Activated B cell treated with CpG ODN at 0.5 μM for 24 hours (primary cell): ENCODE measurements at regions of chr1 and their contacts with region 1.

Region 1: GRCh38 chr1:88791192-88791591 is 100.2 kb downstream of the GTF2B start:
- DNase-seq: no peak
- ATAC-seq: no peak
- H3K4me3 Mint-ChIP-seq: no peak overlapping the region
- H3K27ac Mint-ChIP-seq: no peak overlapping the region
- H3K4me1 Mint-ChIP-seq: peaks cover 2% of the 10 kb centered on the region
- H3K27me3 Mint-ChIP-seq: no peaks in the 10 kb centered on the region
- CTCF ChIP-seq: no peak

Region 2: DNA sequence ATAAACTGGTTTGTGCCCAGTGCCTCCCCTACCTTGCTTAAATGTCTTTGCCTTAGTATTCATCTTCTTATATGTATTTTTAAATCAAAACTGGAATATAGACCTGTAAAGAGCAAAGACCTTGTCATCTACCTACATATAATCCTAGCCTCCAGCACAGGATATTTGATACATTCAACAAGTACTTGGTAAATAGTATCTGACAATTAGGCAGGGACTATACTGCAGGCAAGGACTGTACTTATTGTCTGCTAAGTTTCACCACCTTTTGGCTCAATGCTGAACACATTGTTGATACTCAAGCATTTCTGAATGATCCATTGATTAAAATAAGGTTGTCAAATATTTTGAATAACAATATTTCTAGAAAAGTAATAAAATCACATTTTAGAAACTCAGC is 10.7 kb before region 1 on chr1:
- CTCF ChIA-PET with region 1: no interaction called
- POLR2A ChIA-PET with region 1: no interaction called
- intact Hi-C with region 1: loop called (anchors 1 kb)
- DNase-seq: no peak
- ATAC-seq: no peak
- H3K4me3 Mint-ChIP-seq: no peak overlapping the region
- H3K27ac Mint-ChIP-seq: no peak overlapping the region
- H3K4me1 Mint-ChIP-seq: no peaks in the 10 kb centered on the region
- H3K27me3 Mint-ChIP-seq: no peaks in the 10 kb centered on the region
- CTCF ChIP-seq: no peak

Region 3: GRCh38 chr1:88801575-88802208 is 10.5 kb after region 1 on chr1:
- CTCF ChIA-PET with region 1: no interaction called
- POLR2A ChIA-PET with region 1: no interaction called
- intact Hi-C with region 1: no loop called
- DNase-seq: no peak
- ATAC-seq: no peak
- H3K4me3 Mint-ChIP-seq: no peak overlapping the region
- H3K27ac Mint-ChIP-seq: peak overlapping the region; percentile 14
- H3K4me1 Mint-ChIP-seq: peaks cover 5% of the 10 kb centered on the region
- H3K27me3 Mint-ChIP-seq: no peaks in the 10 kb centered on the region
- CTCF ChIP-seq: no peak